ENCODE measurements at regions of chr14 and their contacts with region 1.

Region 1: DNA sequence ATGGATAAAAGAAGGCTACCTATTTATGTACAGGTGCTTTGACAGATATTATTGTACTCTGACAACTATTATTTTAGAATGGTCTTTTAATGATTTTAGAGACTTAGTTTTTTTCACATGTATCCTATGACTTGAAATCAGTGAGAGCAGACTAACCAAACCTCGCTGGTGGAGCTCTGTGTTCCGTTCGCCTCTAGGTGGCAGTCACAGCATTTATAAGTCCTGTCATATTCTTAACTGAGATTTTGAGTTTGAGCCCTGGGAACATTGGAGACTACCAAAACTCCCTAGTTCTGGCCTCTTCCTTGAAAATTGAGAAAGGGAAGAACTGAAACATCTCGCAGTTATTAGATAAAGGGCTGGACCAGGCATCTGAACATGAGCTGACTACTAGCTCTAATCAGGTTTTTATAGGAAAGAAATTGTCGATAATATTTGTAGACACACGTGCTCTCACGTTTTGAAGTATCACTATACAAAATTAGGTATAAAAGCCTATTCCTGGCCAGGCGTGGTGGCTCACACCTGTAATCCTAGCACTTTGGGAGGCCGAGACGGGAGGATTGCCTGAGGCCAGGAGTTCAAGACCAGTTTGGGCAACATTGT is 48.3 kb downstream of the TTLL5 start:
- DNase-seq: peak; percentile 63
- H3K4me3 ChIP-seq: no peak overlapping the region
- H3K27ac ChIP-seq: no peak overlapping the region
- H3K27me3 ChIP-seq: no peaks in the 10 kb centered on the region
- CTCF ChIP-seq: peak; percentile 80

Region 2: DNA sequence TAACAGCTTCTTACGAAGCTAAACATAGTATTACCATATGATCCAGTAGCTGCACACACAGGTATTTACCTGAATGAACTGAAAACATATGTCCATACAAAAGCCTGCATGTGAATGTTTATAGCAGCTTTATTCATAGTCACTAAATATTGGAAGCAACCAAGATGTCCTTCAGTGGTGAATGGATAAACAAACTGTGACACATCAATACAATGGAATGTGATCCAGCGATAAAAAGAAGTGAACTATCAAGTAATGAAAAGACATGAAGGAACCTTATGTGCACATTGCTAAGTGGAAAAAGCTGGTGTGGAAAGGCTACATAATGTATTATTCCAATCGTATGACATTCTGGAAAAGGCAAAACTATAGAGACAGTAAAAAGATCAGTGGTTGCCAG is 319.6 kb before region 1 on chr14:
- CTCF ChIA-PET with region 1: no interaction called
- POLR2A ChIA-PET with region 1: no interaction called
- DNase-seq: no peak
- H3K4me3 ChIP-seq: no peak overlapping the region
- H3K27ac ChIP-seq: no peak overlapping the region
- H3K27me3 ChIP-seq: peaks cover 27% of the 10 kb centered on the region
- CTCF ChIP-seq: no peak

Region 3: GRCh38 chr14:75577729-75578101 is 131.6 kb before region 1 on chr14:
- CTCF ChIA-PET with region 1: interaction called, 27 read pairs
- POLR2A ChIA-PET with region 1: no interaction called
- DNase-seq: peak; percentile 55
- H3K4me3 ChIP-seq: peak overlapping the region; percentile 66
- H3K27ac ChIP-seq: peak overlapping the region; percentile 22
- H3K27me3 ChIP-seq: peaks cover 7% of the 10 kb centered on the region
- CTCF ChIP-seq: peak; percentile 88

Region 4: DNA sequence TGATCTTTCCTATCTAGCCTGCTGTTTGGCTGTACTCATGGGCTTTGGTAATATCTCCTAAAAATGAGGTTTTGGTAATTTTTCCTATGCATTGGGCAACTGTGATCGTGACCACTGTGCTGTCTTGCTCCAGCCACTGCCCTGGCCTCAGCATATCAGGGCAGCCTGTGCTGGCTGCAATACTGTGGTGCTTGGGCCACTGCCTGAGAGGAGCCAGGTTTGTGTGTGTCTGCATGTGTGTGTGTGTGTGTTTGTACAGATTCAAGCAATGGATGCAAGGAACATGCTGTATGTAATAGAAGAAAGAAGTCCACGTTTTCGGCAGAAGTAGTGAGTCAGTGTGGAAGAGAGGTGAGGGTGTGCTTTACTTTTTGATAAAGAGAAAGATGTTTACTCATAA is 61.7 kb before region 1 on chr14:
- CTCF ChIA-PET with region 1: no interaction called
- POLR2A ChIA-PET with region 1: no interaction called
- DNase-seq: no peak
- H3K4me3 ChIP-seq: no peak overlapping the region
- H3K27ac ChIP-seq: no peak overlapping the region
- H3K27me3 ChIP-seq: no peaks in the 10 kb centered on the region
- CTCF ChIP-seq: no peak

Region 5: DNA sequence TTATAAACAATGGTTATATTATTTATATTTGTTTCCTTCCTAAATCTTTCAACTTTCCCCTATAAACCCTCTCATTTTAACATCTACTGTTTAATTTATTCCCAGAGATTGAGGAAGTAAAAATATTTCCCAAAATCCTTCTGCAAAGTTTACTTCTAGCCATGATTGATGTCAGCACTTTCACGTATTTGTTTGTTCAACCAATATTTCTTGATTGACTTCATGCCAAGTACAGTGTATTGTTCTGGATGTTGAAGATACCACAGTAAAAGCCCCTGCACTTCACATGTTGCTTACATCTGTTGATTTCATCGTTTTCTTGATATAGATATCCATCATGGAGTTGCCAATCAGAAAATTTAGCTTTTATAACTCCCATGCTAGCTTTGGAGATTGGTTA is 33.6 kb after region 1 on chr14:
- CTCF ChIA-PET with region 1: interaction called, 10 read pairs
- POLR2A ChIA-PET with region 1: no interaction called
- DNase-seq: no peak
- H3K4me3 ChIP-seq: no peak overlapping the region
- H3K27ac ChIP-seq: no peak overlapping the region
- H3K27me3 ChIP-seq: no peaks in the 10 kb centered on the region
- CTCF ChIP-seq: no peak

Region 6: GRCh38 chr14:75794615-75795038 is 85.3 kb after region 1 on chr14:
- CTCF ChIA-PET with region 1: interaction called, 95 read pairs
- POLR2A ChIA-PET with region 1: interaction called, 3 read pairs
- DNase-seq: peak; percentile 33
- H3K4me3 ChIP-seq: no peak overlapping the region
- H3K27ac ChIP-seq: no peak overlapping the region
- H3K27me3 ChIP-seq: no peaks in the 10 kb centered on the region
- CTCF ChIP-seq: peak; percentile 68

Region 7: GRCh38 chr14:75906676-75907280 is 197.5 kb after region 1 on chr14:
- CTCF ChIA-PET with region 1: interaction called, 74 read pairs
- POLR2A ChIA-PET with region 1: no interaction called
- DNase-seq: peak; percentile 36
- H3K4me3 ChIP-seq: no peak overlapping the region
- H3K27ac ChIP-seq: no peak overlapping the region
- H3K27me3 ChIP-seq: no peaks in the 10 kb centered on the region
- CTCF ChIP-seq: peak; percentile 88

Region 8: GRCh38 chr14:76002199-76002782 is 293.0 kb after region 1 on chr14:
- CTCF ChIA-PET with region 1: interaction called, 14 read pairs
- POLR2A ChIA-PET with region 1: no interaction called
- DNase-seq: no peak
- H3K4me3 ChIP-seq: no peak overlapping the region
- H3K27ac ChIP-seq: no peak overlapping the region
- H3K27me3 ChIP-seq: no peaks in the 10 kb centered on the region
- CTCF ChIP-seq: no peak

Region 9: DNA sequence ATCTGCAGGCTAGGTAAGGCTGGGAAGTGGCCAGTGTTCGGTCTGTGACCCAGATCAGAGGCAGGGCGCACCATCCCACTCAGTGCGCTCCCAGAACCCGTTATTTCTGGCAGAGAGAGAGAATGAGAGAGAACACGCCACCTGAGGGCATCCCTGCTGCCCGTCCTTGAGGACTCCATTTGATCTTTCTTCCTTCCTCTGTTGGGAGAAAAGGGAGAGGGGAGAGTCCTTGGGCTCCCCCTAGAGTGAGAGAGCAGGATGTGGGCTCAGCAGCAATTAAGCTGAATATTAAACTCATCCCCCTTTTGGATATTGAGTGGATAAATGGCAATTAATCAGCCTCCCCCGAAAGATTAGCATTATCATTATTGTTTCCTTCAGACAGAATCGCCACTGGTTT is 346.8 kb after region 1 on chr14:
- CTCF ChIA-PET with region 1: interaction called, 74 read pairs
- POLR2A ChIA-PET with region 1: no interaction called
- DNase-seq: no peak
- H3K4me3 ChIP-seq: no peak overlapping the region
- H3K27ac ChIP-seq: no peak overlapping the region
- H3K27me3 ChIP-seq: no peaks in the 10 kb centered on the region
- CTCF ChIP-seq: peak; percentile 57